Posterior cingulate gyrus (tissue), 11 donors: ENCODE measurements at regions of chr3 and their contacts with region 1.

Region 1: GRCh38 chr3:160941885-160942494 is 163.2 kb downstream of the B3GALNT1 start:
- DNase-seq: peak in 5 of 10 donors; percentile 27 to 78 (median 70)

Region 2: DNA sequence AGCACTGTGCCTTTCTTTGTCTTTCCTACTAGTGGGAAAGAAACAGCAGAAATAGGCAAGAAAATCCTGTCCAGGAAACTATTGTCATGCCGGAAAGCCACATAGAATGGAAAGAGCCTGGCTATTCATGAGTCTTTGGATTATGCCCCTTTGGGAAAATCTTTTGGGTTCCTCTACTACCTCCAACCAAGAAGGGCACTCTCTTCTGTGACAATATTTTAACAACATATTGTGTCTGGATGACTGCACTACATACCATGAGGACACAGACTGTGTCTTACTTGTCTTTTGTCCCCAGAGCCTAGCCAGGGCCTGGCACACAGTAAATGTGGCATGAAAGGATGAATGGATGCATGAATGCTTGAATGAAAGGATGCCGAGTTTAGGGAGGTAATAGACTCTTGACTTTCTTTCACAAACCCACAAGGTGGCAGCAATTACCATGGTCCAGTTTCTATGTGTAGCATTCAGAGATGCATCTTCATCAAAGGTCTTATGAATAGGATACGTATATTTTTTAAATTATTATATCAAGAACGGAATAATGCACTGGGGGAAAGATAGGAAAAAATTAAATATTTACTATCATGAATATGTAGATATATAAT is 234.7 kb before region 1 on chr3:
- intact Hi-C with region 1: loop called (anchors 1 kb)
- DNase-seq: peak in 4 of 10 donors; percentile 22 to 55 (median 38)